ENCODE measurements at regions of chr10 and their contacts with region 1.

Region 1: DNA sequence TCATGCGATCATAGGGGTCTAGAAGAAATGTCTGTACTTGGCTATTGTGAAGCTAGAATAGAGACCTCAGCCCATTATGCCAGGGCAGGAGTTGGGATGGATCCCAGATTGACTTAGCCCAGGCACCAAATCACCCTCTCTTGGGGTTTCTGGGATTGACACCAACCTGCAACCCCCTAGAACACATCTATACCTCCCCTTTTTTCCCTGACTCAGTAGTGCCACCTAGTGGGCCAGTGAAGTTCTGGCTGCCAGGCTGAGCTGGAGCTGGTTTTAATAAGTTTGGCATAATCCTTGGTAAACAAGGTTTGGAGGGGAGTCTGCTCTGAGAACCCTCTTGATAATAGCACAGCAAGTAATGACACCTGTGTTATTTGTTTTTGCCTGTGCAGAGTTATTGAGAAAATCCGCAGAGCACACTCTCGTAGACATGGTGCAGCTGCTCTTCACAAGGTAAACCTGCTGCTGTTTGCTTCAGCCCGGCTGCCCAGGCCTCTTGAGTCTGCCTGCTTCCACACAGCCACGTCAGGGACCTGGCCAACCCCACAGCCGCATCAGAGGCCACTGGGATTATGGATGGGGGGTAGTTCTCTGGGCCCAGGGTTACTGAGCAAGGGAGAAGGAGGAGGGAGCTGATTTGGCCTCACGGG is 43.3 kb upstream of the NFKB2 start:
- DNase-seq: peak; percentile 84
- ATAC-seq: peak; percentile 85
- H3K4me3 Mint-ChIP-seq: no peak overlapping the region
- H3K27ac Mint-ChIP-seq: no peak overlapping the region
- H3K4me1 Mint-ChIP-seq: no peaks in the 10 kb centered on the region
- H3K27me3 Mint-ChIP-seq: peaks cover 8% of the 10 kb centered on the region
- CTCF ChIP-seq: peak; percentile 94

Region 2: GRCh38 chr10:102245101-102245931 is 106.9 kb before region 1 on chr10 and contains the start of gene GBF1:
- CTCF ChIA-PET with region 1: interaction called, 906 read pairs
- POLR2A ChIA-PET with region 1: interaction called, 3 read pairs
- DNase-seq: peak; percentile 90
- ATAC-seq: peak; percentile 93
- H3K4me3 Mint-ChIP-seq: peak within 1 kb of the TSS; percentile 100
- H3K27ac Mint-ChIP-seq: peak within 1 kb of the TSS; percentile 96
- H3K4me1 Mint-ChIP-seq: peaks cover 38% of the 10 kb centered on the region
- H3K27me3 Mint-ChIP-seq: peaks cover 45% of the 10 kb centered on the region
- CTCF ChIP-seq: no peak
- total RNA-seq, gene GBF1: 29.8 to 32.4 TPM (median 32.1 TPM) in 3 replicates

Region 3: GRCh38 chr10:102375250-102375649 is 23.1 kb after region 1 on chr10:
- CTCF ChIA-PET with region 1: interaction called, 11 read pairs
- POLR2A ChIA-PET with region 1: no interaction called
- DNase-seq: peak; percentile 36
- ATAC-seq: peak; percentile 90
- H3K4me3 Mint-ChIP-seq: no peak overlapping the region
- H3K27ac Mint-ChIP-seq: no peak overlapping the region
- H3K4me1 Mint-ChIP-seq: no peaks in the 10 kb centered on the region
- H3K27me3 Mint-ChIP-seq: no peaks in the 10 kb centered on the region
- CTCF ChIP-seq: no peak